Heart right ventricle (tissue), 16 donors: ENCODE measurements at regions of chr6 and their contacts with region 1.

Region 1: DNA sequence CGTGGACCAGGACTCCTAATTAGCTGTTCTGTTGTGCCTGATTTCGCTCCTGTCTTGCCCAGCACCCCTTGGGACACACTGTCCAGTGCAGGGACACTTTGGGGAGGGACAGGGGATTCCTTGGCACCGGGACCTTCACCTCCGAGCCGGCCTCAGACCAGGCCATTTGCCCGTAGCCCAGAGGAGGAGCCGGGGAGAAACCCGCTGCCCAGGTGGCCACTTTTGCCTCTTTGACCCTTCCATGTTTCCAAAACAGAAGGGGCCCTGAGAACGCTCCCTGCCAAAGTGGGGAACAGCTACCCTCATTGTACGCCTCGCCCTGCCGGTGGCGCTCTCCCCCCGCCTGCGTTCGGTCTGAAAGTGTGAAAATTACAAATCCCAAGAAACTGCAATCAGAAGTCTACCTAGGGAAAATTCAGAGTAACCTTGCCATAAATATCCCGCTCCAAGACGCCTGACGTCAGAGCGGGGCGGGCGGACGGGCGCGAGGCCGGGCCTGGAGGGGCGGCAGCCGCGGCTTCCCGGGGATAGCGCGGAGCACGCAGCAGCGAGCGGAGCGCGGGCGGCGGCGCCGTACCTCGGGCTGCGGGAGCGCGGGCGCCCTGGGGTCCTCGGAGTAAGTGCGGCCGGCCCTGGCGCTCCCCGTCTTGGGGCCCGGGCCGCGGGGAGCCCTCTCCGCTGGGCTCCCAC is at the start of gene DAAM2:
- DNase-seq: peak; percentile 62 to 77
- ATAC-seq: peak; percentile 82 to 92 (median 90)
- H3K4me3 ChIP-seq: peak within 1 kb of the TSS; percentile 16 to 77 (median 64)
- H3K27ac ChIP-seq: peak within 1 kb of the TSS in 9 of 10 donors; percentile 53 to 84 (median 69)
- H3K4me1 ChIP-seq: peaks cover 0 to 45% (median 21%) of the 10 kb centered on the region in 9 donors
- H3K27me3 ChIP-seq: peaks cover 0 to 55% (median 0%) of the 10 kb centered on the region in 7 donors
- CTCF ChIP-seq: peak in 4 of 9 donors; percentile 26 to 52 (median 42)
- total RNA-seq, gene DAAM2: 7.7 to 25.9 (median 12.2) TPM

Region 2: DNA sequence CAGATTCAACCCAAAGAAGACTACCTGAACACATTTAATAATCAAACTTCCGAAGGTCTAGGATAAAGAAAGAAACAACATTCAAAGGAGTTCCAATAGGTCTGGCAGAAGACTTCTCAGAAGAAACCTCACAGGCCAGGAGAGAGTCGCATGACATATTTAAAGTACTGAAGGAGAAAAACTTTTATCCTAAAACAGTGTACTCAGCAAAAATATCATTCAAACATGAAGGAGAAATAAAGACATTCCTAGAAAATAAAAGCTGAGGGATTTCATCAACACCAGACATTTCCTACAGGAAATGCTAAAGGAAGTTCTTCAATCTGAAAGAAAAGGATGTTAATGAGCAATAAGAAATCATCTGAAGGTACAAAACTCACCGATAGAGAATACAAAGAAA is 1260.9 kb before region 1 on chr6:
- intact Hi-C with region 1: loop called in 1 of 10 experiments (anchors 5 kb)
- DNase-seq: no peak
- ATAC-seq: no peak
- H3K4me3 ChIP-seq: no peak overlapping the region
- H3K27ac ChIP-seq: no peak overlapping the region
- H3K4me1 ChIP-seq: peaks cover 0 to 5% (median 0%) of the 10 kb centered on the region in 9 donors
- H3K27me3 ChIP-seq: no peaks in the 10 kb centered on the region
- CTCF ChIP-seq: no peak

Region 3: DNA sequence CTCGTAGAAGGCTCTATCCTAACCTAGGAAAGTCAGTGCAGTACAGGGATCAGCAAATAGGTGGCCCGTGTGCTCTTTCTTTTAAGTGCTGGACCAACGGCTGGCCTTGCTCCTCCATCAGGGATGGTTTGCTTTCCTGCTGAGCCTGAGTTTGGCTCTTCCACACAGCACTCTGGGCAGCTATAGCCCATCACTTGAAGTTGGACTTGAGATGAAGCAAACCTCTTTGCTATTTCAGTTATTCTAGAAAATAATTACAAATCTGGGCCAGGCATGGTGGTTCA is 402.6 kb before region 1 on chr6:
- intact Hi-C with region 1: loop called in 1 of 10 experiments (anchors 5 kb)
- DNase-seq: no peak
- ATAC-seq: peak in 2 of 8 donors; percentile 39 to 53
- H3K4me3 ChIP-seq: no peak overlapping the region
- H3K27ac ChIP-seq: no peak overlapping the region
- H3K4me1 ChIP-seq: no peaks in the 10 kb centered on the region
- H3K27me3 ChIP-seq: peaks cover 0 to 4% (median 0%) of the 10 kb centered on the region in 7 donors
- CTCF ChIP-seq: peak in 6 of 9 donors; percentile 9 to 35 (median 28)

Region 4: GRCh38 chr6:39714802-39715201 is 77.2 kb before region 1 on chr6:
- intact Hi-C with region 1: no loop called
- DNase-seq: no peak
- ATAC-seq: no peak
- H3K4me3 ChIP-seq: no peak overlapping the region
- H3K27ac ChIP-seq: no peak overlapping the region
- H3K4me1 ChIP-seq: no peaks in the 10 kb centered on the region
- H3K27me3 ChIP-seq: no peaks in the 10 kb centered on the region
- CTCF ChIP-seq: no peak

Region 5: DNA sequence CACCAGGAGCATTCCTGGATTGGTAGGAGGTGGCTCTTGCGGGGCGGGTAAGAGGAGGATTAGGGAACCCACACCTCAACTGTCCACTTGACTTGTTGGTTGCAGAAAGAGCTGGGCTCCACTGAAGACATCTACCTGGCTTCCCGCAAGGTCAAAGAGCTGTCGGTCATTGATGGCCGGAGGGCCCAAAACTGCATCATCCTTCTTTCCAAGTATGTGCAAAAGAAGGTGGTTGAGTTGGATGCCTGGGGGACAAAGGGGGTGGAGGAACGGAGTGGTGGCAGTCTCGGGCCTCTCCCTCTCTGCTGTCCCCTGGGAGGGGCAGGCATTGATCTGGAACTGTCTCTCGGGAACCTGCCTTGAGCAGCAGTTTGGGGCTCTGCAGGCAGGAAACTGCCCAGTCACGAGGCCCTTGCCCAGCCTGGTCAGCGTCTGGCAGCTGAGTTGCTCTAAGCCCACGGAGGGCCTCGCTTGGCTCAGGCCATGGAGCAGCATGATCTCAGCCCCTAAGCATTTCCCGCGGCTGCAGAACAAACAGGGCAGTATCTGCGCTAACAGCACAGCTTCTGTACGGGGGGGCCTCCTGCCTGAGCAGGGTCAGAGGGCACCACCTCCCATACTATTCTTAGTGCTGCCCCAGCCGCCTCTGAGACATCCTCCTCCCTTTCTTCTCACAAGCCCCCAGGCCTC is 95.5 kb after region 1 on chr6:
- intact Hi-C with region 1: loop called in 3 of 10 experiments (anchors 5 kb)
- DNase-seq: peak; percentile 80 to 83
- ATAC-seq: peak; percentile 89 to 97 (median 94)
- H3K4me3 ChIP-seq: no peak overlapping the region
- H3K27ac ChIP-seq: peak overlapping the region; percentile 42 to 75 (median 64)
- H3K4me1 ChIP-seq: peaks cover 8 to 54% (median 38%) of the 10 kb centered on the region in 9 donors
- H3K27me3 ChIP-seq: no peaks in the 10 kb centered on the region
- CTCF ChIP-seq: no peak